Panc1 (cell line): ENCODE measurements at regions of chr19 and their contacts with region 1.

Region 1: GRCh38 chr19:40084948-40085347 is 5.8 kb downstream of the ZNF780A start:
- DNase-seq: no peak
- ATAC-seq: peak; percentile 47
- H3K4me3 ChIP-seq: peak overlapping the region in 1 of 2 experiments; percentile 0; a peak in 2 of 4 replicates
- H3K27ac ChIP-seq: peak overlapping the region; percentile 40
- H3K4me1 ChIP-seq: peaks cover 20% of the 10 kb centered on the region
- H3K27me3 ChIP-seq: no peaks in the 10 kb centered on the region
- CTCF ChIP-seq: no peak

Region 2: DNA sequence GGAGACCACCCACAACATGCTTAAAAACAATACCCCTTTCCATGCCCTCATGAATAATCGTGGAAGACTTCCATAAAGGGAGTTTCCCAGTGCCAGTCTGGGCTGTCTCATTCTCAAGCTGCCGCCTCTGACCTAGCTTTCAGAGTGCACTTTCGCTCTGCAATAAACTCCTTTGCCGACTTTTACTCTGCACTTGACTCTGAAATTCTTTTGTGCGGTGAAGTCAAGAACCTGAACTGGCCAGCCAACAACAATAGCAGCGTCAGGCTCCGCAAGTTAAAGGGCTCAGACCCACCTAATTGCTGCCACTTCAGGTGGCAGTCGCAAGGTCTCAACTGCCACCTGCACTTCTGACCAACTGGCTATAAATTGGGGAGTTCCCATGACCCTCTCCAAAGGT is 316.6 kb before region 1 on chr19:
- CTCF ChIA-PET with region 1: no interaction called
- POLR2A ChIA-PET with region 1: no interaction called
- in situ Hi-C with region 1: no loop called
- intact Hi-C with region 1: no loop called
- DNase-seq: no peak
- ATAC-seq: peak; percentile 7; the same call in 1 of the 2 replicates
- H3K4me3 ChIP-seq: no peak overlapping the region
- H3K27ac ChIP-seq: no peak overlapping the region
- H3K4me1 ChIP-seq: no peaks in the 10 kb centered on the region
- H3K27me3 ChIP-seq: peaks cover 46% of the 10 kb centered on the region
- CTCF ChIP-seq: no peak

Region 3: DNA sequence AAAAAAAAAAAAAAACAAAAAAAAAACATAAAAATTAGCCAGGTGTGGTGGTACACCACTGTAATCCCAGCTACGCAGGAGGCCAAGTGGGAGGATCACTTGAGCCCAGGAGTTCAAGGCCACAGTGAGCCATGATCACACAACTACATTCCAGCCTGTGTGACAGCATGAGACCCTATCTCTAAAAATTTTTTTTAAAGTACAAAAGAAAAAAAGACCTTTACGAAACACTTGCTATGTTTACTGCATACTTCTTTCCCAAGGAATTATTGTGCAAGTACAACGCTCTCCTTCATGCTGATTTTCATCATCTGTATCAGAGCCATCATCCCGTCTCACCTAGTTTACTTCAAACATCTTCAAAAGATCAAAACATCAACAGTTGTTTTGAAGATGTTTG is 34.4 kb after region 1 on chr19:
- CTCF ChIA-PET with region 1: interaction called, 3 read pairs
- POLR2A ChIA-PET with region 1: interaction called, 12 read pairs
- in situ Hi-C with region 1: no loop called
- intact Hi-C with region 1: no loop called
- DNase-seq: no peak
- ATAC-seq: no peak
- H3K4me3 ChIP-seq: no peak overlapping the region
- H3K27ac ChIP-seq: no peak overlapping the region
- H3K4me1 ChIP-seq: no peaks in the 10 kb centered on the region
- H3K27me3 ChIP-seq: peaks cover 46% of the 10 kb centered on the region
- CTCF ChIP-seq: no peak

Region 4: GRCh38 chr19:40489882-40490230 is 404.9 kb after region 1 on chr19:
- CTCF ChIA-PET with region 1: no interaction called
- POLR2A ChIA-PET with region 1: no interaction called
- in situ Hi-C with region 1: no loop called
- intact Hi-C with region 1: no loop called
- DNase-seq: no peak
- ATAC-seq: no peak
- H3K4me3 ChIP-seq: no peak overlapping the region
- H3K27ac ChIP-seq: no peak overlapping the region
- H3K4me1 ChIP-seq: no peaks in the 10 kb centered on the region
- H3K27me3 ChIP-seq: no peaks in the 10 kb centered on the region
- CTCF ChIP-seq: no peak

Region 5: DNA sequence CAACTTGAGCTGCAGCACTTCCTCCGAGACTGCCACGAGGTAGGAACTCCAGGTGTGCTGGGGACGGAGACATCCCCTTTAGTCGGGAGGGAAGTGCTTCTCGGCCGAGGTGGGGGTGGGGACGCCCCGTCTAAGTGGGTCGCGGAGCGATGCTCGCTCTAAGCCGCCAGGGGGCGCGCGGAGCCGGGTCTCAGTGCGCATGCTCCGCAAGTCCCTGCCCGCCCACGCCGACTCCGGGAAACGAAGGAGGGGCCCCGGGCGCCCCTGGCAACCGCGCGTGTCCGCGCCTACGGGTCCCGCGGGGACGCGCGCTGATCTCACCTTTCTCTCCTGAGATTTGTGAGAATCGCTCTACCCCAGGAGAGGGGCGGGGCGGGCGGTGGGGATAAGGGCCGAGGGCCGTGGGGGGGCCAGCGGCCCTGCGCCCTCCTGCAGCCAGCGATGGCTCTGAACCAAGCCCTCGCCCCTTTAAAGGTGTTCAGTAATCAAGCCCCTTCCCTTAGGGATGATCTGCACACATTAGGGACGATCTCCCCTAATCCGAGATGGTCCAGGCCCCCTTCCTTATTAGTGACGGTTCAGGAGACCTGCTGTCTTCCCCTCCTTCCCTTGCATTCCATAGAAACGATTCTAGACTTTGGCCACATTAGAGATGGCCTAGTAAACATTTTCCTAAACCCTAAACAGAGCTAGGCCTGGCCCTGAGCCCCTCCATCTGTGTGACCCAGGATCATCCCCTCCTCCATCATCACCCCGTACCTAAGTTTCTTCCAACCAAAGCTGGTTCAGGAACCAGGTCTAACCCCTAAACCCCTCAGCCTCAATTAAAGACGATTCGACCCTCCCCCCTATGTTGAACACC is 444.4 kb after region 1 on chr19:
- CTCF ChIA-PET with region 1: no interaction called
- POLR2A ChIA-PET with region 1: no interaction called
- in situ Hi-C with region 1: no loop called
- intact Hi-C with region 1: no loop called
- DNase-seq: peak; percentile 38
- ATAC-seq: peak; percentile 79
- H3K4me3 ChIP-seq: peak overlapping the region; percentile 40 to 45
- H3K27ac ChIP-seq: peak overlapping the region; percentile 44; the same call in 1 of the 2 replicates
- H3K4me1 ChIP-seq: peaks cover 8% of the 10 kb centered on the region
- H3K27me3 ChIP-seq: no peaks in the 10 kb centered on the region
- CTCF ChIP-seq: peak; percentile 94